PC-9 (cell line): ENCODE measurements at regions of chr9 and their contacts with region 1.

Region 1: DNA sequence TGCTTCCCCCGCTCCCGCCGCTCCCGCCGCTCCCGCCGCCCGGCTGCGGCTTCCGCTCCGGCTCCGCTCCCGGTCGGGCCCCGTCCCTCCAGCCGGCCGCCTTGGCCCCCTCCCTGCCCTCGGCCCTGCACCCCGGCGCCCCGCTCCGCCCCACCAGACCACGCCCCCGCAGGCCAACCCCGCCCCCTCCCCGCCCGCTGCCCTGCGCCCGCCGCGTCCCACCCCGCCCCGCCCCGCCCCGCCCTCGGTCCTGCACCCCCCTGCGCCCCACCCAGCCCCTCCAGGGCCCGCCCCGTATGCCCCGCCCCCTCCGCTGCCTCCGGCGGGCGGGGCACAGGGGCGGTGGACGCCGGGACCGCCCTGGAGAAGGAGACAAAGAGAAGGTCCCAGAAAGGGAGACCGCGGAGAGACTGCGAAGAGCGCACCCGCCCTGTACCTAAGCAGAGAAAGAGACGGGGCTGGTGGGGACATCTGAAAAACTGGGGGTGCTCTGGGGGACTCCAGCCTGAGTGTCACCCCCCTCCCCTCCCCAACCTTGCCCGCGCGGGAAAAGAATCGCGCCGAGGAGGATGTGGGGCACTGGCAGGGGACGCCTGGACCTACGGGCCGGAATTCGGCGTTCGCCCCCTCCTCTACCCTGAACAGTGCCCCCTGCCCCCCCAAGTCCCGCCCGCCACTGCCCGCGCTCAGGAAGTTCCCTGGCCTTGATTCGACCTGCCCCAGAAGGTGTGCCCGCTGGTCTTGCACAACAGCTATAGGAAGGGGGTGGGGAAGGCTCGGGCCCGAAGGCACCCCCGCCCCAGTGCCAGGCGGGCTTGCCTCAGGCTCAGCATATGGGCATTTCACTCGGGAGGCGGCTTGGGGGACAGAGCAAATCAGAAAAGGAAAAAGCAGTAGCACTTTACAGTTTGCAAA is 42.8 kb upstream of the STXBP1 start:
- DNase-seq: peak; percentile 67 to 88
- H3K4me3 ChIP-seq: peak overlapping the region; percentile 87
- H3K27ac ChIP-seq: peak overlapping the region; percentile 93
- H3K4me1 ChIP-seq: peaks cover 76% of the 10 kb centered on the region
- H3K27me3 ChIP-seq: no peaks in the 10 kb centered on the region
- CTCF ChIP-seq: no peak

Region 2: GRCh38 chr9:126973651-126974529 is 595.3 kb before region 1 on chr9:
- CTCF ChIA-PET with region 1: no interaction called
- POLR2A ChIA-PET with region 1: interaction called, 19 read pairs
- intact Hi-C with region 1: no loop called
- DNase-seq: no peak
- H3K4me3 ChIP-seq: no peak overlapping the region
- H3K27ac ChIP-seq: no peak overlapping the region
- H3K4me1 ChIP-seq: no peaks in the 10 kb centered on the region
- H3K27me3 ChIP-seq: no peaks in the 10 kb centered on the region
- CTCF ChIP-seq: no peak

Region 3: GRCh38 chr9:127555768-127556397 is 13.3 kb before region 1 on chr9:
- CTCF ChIA-PET with region 1: no interaction called
- POLR2A ChIA-PET with region 1: interaction called, 18 read pairs
- intact Hi-C with region 1: loop called (anchors 1 kb)
- DNase-seq: peak; percentile 94
- H3K4me3 ChIP-seq: no peak overlapping the region
- H3K27ac ChIP-seq: peak overlapping the region; percentile 74
- H3K4me1 ChIP-seq: peaks cover 69% of the 10 kb centered on the region
- H3K27me3 ChIP-seq: no peaks in the 10 kb centered on the region
- CTCF ChIP-seq: no peak